PC-9 (cell line): ENCODE measurements at regions of chr1 and their contacts with region 1.

Region 1: DNA sequence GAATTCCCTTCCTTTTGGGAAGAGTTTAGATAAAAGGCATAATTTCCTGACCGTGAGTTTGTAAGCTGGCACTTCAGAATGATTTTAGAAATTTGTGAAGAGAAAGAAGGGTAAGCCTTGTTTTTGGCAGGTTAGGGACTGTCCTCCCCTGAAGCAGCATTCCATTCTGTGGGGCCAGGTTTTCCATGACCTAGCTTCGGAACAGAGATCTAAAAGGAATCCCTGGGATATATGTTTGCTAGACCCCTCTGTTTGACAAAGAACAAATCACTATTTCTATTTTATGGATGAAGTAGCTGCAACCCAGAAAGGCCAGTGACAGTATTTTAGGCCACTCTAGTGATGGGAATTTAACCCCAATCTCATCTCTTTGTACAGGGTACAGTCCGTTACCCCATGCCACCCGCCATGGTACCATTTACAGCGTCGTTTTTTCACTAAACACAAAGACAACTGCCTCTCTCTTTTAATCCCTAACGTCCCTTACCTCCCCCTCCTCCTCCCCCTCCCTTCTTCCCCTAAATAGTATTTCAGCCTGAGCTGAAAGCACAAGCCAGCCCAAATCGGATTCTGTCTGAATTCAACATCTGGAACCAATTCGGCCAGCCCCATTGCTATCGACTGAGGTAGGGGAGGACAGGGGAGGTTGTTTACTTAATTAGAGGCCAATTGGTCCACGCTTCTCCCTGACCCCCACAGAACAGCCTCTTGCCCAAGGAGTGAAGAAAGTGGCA is 23.4 kb upstream of the IKBKE start:
- DNase-seq: no peak
- H3K4me3 ChIP-seq: no peak overlapping the region
- H3K27ac ChIP-seq: no peak overlapping the region
- H3K4me1 ChIP-seq: peaks cover 6% of the 10 kb centered on the region; the same call in 1 of the 2 replicates
- H3K27me3 ChIP-seq: no peaks in the 10 kb centered on the region
- CTCF ChIP-seq: no peak

Region 2: DNA sequence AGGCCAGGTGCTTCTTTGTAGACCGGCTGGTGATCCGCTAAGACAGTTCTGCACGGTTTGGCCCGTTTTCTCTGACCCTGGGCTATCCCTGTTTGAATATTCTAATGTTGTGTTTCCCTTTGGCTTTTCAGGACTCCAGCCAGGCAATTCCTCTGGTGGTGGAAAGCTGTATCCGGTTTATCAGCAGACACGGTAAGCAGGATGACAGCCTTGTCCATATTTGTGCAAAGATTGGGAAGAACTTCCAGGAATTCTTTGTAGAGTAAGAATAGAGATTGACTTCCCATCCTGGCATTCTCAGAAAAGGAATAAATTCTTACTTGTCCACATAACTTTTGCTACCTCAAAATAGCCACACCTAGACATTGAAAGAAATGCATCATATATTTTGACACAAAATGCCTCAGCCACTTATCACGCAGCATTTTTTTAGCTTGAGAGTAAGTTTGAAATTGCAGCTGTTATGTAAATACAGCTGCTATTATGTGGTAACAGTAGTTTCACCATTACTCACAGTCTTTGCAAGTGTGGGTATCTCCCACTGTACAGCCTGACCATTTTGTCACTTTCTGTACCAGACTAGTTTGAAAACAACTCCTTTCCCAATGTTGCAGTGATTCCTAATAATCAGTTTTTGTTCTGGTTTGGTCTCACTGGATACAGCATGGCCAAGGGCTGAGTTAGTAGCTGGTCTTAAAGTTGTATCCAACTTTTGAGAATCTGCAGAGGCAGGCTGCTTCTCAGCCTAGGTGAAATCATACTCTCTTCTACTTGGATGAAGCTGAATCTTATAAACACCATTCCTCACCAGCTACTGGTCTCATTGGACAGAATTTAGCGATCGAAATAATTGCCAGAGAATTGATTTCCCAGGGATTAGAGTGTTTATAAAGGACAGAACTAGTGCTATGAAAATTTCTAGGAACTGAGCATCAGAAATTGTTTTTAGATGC is 16.5 kb before region 1 on chr1:
- CTCF ChIA-PET with region 1: no interaction called
- POLR2A ChIA-PET with region 1: no interaction called
- intact Hi-C with region 1: no loop called
- DNase-seq: peak in 1 of 2 experiments; percentile 84
- H3K4me3 ChIP-seq: no peak overlapping the region
- H3K27ac ChIP-seq: peak overlapping the region; percentile 84
- H3K4me1 ChIP-seq: peaks cover 20% of the 10 kb centered on the region
- H3K27me3 ChIP-seq: no peaks in the 10 kb centered on the region
- CTCF ChIP-seq: no peak

Region 3: DNA sequence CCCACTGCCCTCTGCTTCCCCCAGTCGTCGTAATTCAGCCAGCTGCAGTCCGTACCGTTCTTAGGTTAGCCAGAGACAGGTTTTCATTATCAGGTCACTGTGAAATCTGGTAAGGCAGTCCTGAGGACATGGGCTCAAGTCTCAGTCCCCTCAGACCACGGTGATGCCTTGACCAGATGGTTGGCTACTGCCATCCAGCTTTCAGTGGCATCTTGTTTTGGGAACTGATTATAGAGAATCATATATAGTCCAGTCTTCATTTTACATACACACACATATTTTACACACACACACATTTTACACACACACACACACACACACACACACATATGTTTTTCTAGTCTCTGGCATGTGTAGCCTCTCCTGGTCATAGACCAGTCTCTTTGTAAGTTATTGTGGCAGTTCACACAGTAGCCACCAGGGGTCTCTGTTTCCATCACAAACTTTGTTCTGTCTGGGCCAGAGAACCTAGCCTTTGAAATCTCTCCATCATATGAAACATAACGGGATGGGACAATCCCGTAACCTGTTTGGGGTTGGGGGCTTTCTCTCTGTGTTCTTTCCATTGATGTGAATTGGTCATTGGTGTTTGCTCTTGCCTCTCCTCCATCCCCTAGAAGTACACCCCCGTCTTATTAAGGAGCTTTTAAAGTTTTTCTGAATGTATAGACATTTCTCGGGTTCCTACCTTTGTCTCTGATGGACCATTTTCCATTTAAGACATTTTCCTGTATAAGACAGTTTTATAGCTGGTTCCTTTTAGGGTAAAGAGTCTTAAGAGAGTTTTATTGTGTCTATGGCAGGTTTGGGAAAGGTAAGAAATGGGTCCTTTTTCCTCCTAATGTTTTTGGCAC is 15.0 kb after region 1 on chr1:
- CTCF ChIA-PET with region 1: interaction called, 15 read pairs
- POLR2A ChIA-PET with region 1: no interaction called
- intact Hi-C with region 1: no loop called
- DNase-seq: peak; percentile 49 to 57
- H3K4me3 ChIP-seq: no peak overlapping the region
- H3K27ac ChIP-seq: no peak overlapping the region
- H3K4me1 ChIP-seq: no peaks in the 10 kb centered on the region
- H3K27me3 ChIP-seq: no peaks in the 10 kb centered on the region
- CTCF ChIP-seq: peak; percentile 87